Right cardiac atrium (tissue), 5 donors: ENCODE measurements at regions of chr16 and their contacts with region 1.

Region 1: GRCh38 chr16:75206749-75207451 is at the start of gene CTRB2:
- DNase-seq: peak in 1 of 3 donors; percentile 48
- ATAC-seq: peak; percentile 4 to 17
- H3K4me3 ChIP-seq: no peak within 1 kb of the TSS
- H3K27ac ChIP-seq: no peak within 1 kb of the TSS
- H3K4me1 ChIP-seq: no peaks in the 10 kb centered on the region
- H3K27me3 ChIP-seq: no peaks in the 10 kb centered on the region
- total RNA-seq, gene CTRB2: 2.9 TPM in 1 of 4 donors, not detected in the others

Region 2: DNA sequence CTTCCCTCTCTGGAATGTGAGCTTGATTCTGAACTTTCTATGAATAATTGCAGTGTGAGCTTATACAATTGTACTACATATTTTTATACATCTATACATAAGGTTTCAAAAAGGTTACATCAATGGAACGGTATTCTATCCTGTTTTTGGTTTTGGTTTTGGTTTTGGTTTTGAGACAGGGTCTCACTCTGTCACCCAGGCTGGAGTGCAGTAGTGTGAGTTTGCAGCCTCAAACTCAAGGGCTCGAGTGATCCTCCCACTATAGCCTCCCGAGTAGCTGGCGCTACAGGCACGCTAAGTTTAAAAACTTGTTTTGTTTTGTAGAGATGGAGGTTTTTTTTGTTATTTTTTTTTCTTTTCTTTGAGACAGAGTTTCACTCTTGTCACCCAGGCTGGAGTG is 12.9 kb after region 1 on chr16:
- intact Hi-C with region 1: loop called in 3 of 4 experiments (anchors 2 kb)
- DNase-seq: no peak
- ATAC-seq: no peak
- H3K4me3 ChIP-seq: no peak overlapping the region
- H3K27ac ChIP-seq: no peak overlapping the region
- H3K4me1 ChIP-seq: no peaks in the 10 kb centered on the region
- H3K27me3 ChIP-seq: no peaks in the 10 kb centered on the region

Region 3: DNA sequence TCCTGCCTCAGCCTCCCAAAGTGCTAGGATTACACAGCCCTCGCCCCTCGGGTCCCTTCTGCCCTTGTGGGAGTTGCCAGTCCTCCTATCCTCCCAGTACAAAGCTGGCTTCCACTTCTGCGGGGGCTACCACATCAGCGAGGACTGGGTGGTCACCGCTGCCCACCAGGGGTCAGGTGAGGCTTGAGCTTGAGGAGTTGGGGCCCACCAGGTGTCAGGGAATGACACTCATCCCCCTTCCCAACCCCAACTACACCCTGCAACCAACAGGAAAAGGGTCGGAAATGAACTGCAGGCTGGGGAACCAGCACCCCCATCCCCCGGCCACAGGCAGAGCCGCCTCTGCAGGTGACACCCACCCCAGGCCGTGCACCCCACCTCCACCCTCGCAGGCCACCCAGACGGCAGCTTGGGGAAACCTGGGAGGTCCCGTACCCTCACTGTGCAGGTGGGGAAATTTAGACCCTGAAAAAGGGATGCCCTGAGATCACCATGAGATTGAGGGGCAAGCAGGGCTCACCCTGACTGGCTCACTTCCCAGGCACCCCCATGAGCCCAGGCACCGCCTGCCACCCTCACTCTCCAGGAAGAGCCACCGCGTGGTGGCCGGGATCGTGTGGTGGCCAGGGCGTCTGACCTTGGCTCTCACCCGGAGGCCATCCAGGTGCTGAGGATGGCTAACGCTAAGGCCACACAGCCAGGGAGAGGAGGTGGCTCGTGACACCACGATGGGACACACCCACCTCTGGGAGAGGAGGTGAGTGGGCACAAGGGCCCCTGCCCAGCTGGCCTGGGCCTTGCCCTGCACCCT is 19.9 kb after region 1 on chr16:
- intact Hi-C with region 1: loop called (anchors 1 to 2 kb)
- DNase-seq: peak in 1 of 3 donors; percentile 51
- ATAC-seq: no peak
- H3K4me3 ChIP-seq: no peak overlapping the region
- H3K27ac ChIP-seq: no peak overlapping the region
- H3K4me1 ChIP-seq: no peaks in the 10 kb centered on the region
- H3K27me3 ChIP-seq: no peaks in the 10 kb centered on the region

Region 4: DNA sequence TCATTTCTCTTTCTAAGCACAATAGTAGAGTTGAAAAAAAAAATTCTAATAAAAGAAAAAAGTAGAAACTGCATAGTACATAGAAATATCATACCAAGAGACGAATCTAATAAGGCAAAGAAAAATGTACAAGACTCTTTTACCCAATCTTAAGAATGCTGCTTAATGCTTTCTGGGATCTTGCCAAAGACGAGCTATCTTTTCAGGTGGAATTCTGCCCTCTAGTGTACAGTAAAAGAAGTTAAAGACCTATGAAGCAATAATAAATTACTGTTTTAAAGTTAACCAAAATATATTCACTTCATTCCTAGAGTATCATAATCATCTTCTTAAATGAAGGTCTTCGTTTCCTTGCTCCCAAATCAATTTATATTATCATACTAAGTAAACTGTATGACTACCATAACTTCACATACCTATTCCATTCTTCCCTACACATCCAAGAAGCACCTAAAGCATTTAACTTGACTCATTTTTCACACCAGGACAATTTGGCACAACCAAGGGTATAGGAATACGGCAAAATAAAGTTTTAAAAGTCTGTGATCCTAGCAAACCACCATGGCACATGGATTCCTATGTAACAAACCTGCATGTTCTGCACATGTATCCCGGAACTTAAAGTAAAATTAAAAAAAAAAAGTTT is 178.7 kb after region 1 on chr16:
- intact Hi-C with region 1: loop called in 1 of 4 experiments (anchors 10 kb)
- DNase-seq: no peak
- ATAC-seq: peak in 1 of 2 donors; percentile 48
- H3K4me3 ChIP-seq: no peak overlapping the region
- H3K27ac ChIP-seq: no peak overlapping the region
- H3K4me1 ChIP-seq: peaks cover 3% of the 10 kb centered on the region
- H3K27me3 ChIP-seq: no peaks in the 10 kb centered on the region